ENCODE measurements at regions of chr3 and their contacts with region 1.

Region 1: GRCh38 chr3:12984023-12984823 is 89.0 kb downstream of the IQSEC1 start:
- DNase-seq: peak; percentile 51 to 77
- ATAC-seq: peak; percentile 80 to 85 (median 82)
- H3K4me3 ChIP-seq: no peak overlapping the region
- H3K4me3 Mint-ChIP-seq: peak overlapping the region; percentile 37
- H3K27ac ChIP-seq: peak overlapping the region; percentile 2
- H3K27ac Mint-ChIP-seq: peak overlapping the region; percentile 64 to 68
- H3K4me1 ChIP-seq: peaks cover 55% of the 10 kb centered on the region
- H3K4me1 Mint-ChIP-seq: peaks cover 62 to 70% of the 10 kb centered on the region in 2 donors
- H3K27me3 ChIP-seq: no peaks in the 10 kb centered on the region
- H3K27me3 Mint-ChIP-seq: no peaks in the 10 kb centered on the region
- CTCF ChIP-seq: peak; percentile 73

Region 2: DNA sequence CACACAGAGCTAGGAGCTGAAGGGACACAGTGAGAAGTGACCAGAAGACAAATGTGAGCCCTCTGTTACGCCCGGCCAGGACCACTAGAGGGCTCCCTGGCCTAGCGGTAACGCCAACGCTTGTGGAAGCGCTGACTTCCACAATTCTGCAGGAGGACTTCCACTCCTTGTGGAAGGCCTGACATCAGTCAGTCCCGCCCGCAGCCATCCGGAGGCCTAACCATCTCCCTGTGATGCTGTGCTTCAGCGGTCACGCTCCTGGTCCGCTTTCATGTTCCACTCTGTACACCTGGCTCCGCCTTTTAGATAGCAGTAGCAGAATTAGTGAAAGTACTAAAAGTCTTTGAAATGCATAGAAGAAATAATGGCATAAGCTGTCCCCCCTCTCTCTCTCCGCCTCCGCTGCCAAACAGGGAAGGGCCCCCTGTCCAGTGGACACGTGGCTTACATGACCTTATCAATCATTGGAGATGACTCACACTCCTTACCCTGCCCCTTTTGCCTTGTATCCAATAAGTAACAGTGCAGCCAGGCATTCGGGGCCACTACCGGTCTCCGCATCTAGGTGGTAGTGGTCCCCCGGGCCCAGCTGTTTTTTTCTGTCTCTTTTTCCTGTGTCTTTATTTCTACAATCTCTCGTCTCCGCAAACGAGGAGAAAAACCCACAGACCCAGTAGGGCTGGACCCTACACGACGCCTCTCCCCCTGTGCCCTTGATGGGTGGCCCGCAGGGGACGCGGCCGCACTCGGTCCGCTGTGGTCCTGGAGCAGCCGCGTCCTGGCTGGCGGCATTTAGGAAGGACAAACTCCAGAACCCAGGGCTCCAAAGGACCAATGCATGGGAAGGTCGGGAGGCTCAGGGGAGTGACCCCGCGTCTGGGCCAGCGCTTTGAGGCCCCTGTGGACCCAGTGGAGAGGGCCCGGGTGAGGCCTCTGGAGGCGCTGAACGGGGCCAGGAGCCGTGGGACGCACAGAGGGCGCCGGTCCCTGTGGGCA is 115.9 kb before region 1 on chr3:
- intact Hi-C with region 1: loop called (anchors 1 kb)
- DNase-seq: peak; percentile 57 to 76
- ATAC-seq: peak; percentile 76 to 84 (median 79)
- H3K4me3 ChIP-seq: peak overlapping the region; percentile 38
- H3K4me3 Mint-ChIP-seq: peak overlapping the region; percentile 90
- H3K27ac ChIP-seq: no peak overlapping the region
- H3K27ac Mint-ChIP-seq: peak overlapping the region; percentile 6 to 51
- H3K4me1 ChIP-seq: peaks cover 32% of the 10 kb centered on the region
- H3K4me1 Mint-ChIP-seq: peaks cover 18 to 29% of the 10 kb centered on the region in 2 donors
- H3K27me3 ChIP-seq: peaks cover 4% of the 10 kb centered on the region
- H3K27me3 Mint-ChIP-seq: peaks cover 9 to 14% of the 10 kb centered on the region in 2 donors
- CTCF ChIP-seq: peak; percentile 81

Region 3: DNA sequence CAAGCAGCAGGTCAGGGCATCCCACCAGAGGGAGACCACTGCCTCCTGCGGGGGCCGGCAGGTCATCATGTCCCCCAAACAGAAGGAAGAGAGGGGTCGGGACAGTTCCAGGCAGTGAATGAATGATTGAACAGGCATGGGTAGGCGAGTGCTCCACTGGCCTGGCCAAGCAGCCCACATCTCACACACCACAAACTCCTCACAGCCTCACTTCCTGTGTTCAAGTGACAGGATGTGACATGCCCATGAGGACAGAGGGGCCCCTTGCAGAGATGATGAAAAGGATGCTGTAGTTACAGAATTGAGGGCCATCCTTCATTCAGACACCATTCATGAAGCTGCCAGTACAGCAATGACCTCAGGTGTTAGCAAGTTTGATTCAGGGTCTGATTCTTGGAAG is 85.3 kb after region 1 on chr3:
- intact Hi-C with region 1: no loop called
- DNase-seq: peak; percentile 62 to 75
- ATAC-seq: peak; percentile 71 to 86 (median 79)
- H3K4me3 ChIP-seq: no peak overlapping the region
- H3K4me3 Mint-ChIP-seq: peak overlapping the region; percentile 69
- H3K27ac ChIP-seq: peak overlapping the region; percentile 80
- H3K27ac Mint-ChIP-seq: peak overlapping the region; percentile 93 to 94
- H3K4me1 ChIP-seq: peaks cover 75% of the 10 kb centered on the region
- H3K4me1 Mint-ChIP-seq: peaks cover 55 to 70% of the 10 kb centered on the region in 2 donors
- H3K27me3 ChIP-seq: no peaks in the 10 kb centered on the region
- H3K27me3 Mint-ChIP-seq: peaks cover 0 to 5% of the 10 kb centered on the region in 2 donors
- CTCF ChIP-seq: no peak

Measured in natural killer cell (primary cell).